ENCODE measurements at regions of chr22 and their contacts with region 1.

Region 1: DNA sequence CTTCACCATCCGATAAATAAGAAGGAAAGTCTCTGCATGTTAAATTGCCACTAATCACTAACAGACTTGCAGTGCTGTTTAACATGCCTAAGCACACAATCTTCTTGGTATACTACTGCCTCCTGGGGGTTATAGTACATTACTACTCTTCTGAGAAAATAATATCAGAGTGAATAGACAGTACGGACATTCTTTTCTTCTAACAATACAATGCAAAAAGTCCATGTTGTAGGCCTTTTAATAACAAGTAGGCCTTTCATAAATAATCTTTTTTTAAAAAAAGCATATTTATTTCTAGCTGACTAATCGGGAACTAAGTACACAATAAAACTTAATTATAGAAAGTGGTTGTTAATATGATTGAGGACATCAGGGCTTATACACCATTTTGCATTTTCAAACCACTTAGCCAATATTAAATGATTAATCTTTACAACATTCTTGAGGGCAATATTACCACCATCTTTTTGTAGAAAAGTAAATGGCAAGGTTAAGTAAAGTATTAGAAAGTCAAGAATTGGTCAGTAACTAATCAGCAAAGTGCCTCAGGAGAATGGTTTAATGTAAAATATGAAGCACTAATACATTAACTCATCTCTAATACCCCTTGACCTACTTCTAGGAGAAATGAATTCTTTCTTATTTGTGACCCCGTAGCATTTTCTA is 84.7 kb downstream of the TTC28 start:
- DNase-seq: no peak
- ATAC-seq: peak; percentile 87

Region 2: DNA sequence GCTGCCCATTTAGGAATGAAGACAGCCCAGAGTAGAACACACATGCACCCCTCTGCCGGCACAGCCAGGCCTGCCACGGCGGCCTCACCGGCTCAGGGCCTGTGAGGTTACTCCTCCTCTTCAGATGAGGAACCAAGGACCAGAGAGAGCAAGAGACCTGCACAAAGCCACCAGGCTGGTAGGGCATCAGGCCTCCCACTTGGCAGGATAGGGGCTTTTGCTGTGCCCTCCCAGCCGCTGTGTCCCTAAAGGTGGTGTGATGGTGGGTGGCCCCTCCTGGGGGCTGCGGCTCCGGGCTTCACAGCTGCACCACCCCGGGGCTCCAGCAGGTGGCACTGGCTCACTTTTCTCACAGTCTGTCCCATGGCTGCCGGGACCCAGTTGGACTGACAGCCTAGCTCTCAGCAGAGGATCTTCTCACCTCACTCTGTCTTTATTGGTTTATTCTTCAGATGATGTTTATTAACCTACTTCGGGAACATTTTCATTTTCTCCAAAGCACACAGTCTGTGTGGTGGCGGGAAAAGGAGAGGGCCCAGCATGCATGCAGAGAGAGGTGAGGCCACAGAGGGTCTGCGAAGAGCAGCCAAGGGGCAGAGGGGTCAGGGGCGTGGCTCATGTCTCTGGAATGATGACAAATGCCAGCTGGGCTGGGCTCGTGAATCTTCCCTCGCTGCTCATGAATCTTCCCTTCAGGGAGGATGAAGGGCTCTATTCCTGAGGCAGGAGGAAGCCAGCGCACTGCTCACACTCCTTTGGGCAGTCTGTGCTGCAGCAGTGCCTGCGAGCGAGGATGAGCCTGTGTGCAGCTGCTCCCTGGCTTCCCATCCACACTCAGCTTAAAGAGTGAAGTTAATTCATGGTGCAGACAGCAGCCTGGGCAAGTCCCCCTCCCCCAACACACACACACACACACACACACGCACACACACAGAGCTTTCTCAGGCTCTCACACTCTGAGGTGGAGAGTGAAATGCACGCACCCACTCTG is 574.8 kb before region 1 on chr22:
- intact Hi-C with region 1: loop called (anchors 10 kb)
- DNase-seq: peak; percentile 86
- ATAC-seq: peak; percentile 68

Region 3: GRCh38 chr22:28051787-28052356 is 543.1 kb before region 1 on chr22:
- intact Hi-C with region 1: loop called (anchors 5 kb)
- DNase-seq: peak; percentile 84
- ATAC-seq: peak; percentile 69

Region 4: DNA sequence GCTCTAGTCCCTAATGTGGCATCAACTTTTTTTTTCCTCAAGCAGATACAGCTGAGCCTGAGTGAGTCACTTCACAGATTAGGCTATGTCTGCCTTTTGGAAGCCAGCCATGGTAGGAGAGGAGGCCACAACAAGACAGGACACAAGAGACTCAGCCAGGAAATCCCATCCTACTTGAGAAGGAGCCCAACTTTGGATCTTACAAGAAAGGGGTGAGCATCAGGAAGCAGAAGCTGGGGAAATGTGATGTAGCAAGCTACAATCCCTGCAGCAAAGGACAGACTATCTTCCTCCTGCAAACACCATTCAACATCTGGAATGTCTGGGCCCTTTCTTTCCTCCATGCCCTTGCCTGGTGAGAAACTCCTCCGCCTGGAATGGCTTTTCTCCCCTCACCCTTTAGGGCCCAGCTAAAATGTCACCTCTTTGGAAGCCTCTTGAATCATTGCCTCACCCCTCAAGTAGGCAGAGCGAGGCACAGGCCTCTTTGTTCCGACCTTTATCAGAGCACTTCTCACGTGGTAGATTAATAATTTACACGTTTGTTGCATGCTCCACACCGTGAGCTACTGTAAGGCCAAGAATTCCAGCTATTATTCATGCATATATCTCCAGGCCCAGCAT is 519.5 kb before region 1 on chr22:
- intact Hi-C with region 1: no loop called
- DNase-seq: peak; percentile 30
- ATAC-seq: peak; percentile 77

Region 5: DNA sequence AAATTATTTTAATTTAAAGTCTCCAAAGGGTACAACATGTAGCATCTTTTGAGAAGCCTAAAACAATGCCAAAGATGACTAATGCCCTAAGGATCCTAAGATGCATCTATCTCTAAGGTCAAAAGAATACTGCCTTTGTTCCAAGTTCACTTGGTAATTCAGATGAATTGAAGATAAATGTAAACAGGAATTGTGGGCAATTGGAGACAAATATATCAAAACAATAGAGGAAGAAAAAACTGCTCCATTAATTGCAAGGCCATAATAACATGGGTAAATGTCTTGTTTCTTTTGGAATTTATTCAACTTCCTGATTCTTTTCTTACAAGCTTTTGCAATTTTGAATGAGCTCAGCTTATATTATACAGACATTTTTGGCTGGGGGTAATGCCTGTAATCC is 253.9 kb before region 1 on chr22:
- intact Hi-C with region 1: no loop called
- DNase-seq: no peak
- ATAC-seq: no peak

Region 6: DNA sequence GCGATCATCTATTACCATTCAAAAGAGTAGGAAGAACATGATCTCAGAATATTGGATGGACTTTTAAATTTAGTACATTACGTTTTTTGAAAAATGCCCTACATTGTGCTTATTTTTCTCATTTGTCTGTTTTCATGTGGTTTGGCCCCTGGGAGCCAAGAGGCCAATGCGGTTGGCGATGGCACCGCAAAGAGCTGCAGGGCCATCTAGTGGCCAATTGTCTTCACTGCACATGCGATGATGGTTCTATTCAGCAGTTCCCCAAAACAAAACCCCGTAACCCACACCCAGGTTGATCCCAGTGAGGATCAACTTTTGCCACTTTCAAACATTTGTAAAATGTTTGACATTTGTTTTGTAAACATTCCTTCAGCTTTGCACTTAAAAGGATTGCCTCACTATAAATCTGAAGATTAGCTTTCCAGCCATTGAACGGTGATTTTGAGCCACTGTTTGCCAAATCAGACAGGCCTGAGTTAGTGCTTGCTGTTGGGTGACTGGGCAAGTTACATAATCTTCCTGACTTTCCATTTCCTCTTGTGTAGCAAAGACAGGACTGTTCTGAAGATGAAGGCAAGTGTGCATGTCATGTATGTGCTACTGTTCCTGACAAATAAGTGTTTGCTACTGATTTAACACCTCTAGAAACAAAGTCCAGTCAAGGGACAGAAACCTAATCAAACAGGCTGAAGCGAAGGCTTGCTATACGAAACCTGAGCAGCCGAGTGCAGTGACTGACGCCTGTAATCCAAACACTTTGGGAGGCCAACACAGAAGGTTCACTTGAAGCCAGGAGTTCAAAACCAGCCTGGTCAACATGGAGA is 234.6 kb after region 1 on chr22:
- intact Hi-C with region 1: loop called (anchors 5 kb)
- DNase-seq: peak; percentile 80
- ATAC-seq: peak; percentile 94

Region 7: GRCh38 chr22:29022101-29022817 is 427.3 kb after region 1 on chr22:
- intact Hi-C with region 1: no loop called
- DNase-seq: no peak
- ATAC-seq: no peak